GM13977 (cell line): ENCODE measurements at regions of chr12 and their contacts with region 1.

Region 1: DNA sequence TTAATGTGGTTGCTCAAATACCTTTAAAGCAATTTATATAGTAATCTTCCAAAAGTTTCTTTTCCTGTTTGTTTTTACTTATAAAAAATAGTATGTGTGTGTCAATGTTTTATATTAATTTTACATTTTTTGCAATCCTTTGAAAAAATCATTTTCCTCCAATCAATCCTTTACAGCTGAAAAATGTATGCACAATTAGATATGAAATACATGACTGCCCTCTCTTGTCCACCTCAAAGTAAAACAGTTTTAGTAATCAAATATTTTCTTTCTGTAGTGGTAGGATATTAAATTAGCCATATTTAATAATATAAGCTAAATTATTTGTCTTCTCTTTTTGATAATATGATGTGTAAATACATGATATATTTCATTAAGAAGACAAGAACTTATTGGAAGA is 269.9 kb downstream of the ADAMTS20 start:
- DNase-seq: no peak
- CTCF ChIP-seq: peak; percentile 42

Region 2: GRCh38 chr12:42482445-42483237 is 799.5 kb before region 1 on chr12:
- in situ Hi-C with region 1: loop called (anchors 25 kb)
- DNase-seq: peak; percentile 91
- CTCF ChIP-seq: peak; percentile 99

Region 3: GRCh38 chr12:42589465-42590329 is 692.4 kb before region 1 on chr12 and contains the start of gene PRICKLE1:
- in situ Hi-C with region 1: loop called (anchors 25 kb)
- DNase-seq: peak; percentile 74
- CTCF ChIP-seq: no peak

Region 4: GRCh38 chr12:43069768-43070221 is 212.3 kb before region 1 on chr12:
- in situ Hi-C with region 1: no loop called
- DNase-seq: no peak
- CTCF ChIP-seq: no peak

Region 5: GRCh38 chr12:43338848-43339526 is 56.9 kb after region 1 on chr12:
- in situ Hi-C with region 1: no loop called
- DNase-seq: no peak
- CTCF ChIP-seq: peak; percentile 70

Region 6: DNA sequence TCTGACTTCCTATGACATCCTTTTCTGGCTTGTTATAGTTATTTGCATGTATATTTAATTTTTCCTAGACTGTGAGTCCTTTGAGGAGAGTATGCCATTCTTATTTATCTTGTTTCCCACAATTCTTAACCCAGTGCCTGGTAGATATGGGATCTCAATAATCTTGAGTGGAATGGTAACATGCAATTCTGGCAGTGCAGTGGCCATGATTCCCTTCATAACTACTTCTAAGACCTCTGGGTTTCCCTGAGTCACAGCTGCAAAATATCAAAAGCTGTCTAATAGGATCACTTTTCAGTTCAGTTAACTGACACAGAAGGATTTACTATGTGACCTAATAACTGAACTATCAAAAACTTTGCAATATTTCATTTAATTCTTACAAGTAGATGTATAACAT is 134.9 kb after region 1 on chr12:
- in situ Hi-C with region 1: no loop called
- DNase-seq: no peak
- CTCF ChIP-seq: no peak

Region 7: GRCh38 chr12:43882578-43883178 is 600.6 kb after region 1 on chr12:
- in situ Hi-C with region 1: no loop called
- DNase-seq: peak; percentile 50
- CTCF ChIP-seq: peak; percentile 81